ENCODE measurements at regions of chr20 and their contacts with region 1.

Region 1: DNA sequence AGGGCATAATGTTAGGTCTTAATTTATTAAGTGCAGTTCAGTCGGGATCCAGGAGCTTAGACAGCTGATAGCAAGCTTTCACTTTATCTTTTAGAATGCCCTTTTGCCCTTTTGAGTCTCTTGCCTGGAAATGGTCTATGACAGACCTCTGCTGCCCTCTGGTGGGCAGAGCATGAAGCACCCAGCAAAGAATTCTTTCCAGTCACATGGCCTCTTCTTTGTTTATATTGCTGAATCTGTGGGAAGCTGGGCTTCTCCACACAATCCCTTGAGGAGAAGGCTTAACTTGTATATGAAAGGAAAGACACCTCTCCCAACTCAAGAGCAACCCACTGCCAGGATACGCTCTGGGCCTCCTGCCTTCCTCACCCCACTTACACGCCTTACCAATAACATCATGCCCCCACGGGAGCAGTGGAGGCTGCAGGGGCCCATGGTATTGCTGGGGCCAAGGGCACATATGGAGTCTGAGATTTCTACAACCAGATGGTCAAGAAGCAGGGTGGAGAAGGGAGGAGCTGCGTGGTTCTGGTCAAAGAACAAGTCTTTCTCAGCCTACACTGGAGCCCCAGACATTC is 20.4 kb downstream of the WFDC3 start:
- DNase-seq: peak; percentile 94
- H3K4me3 Mint-ChIP-seq: no peak overlapping the region
- H3K27ac Mint-ChIP-seq: no peak overlapping the region
- H3K4me1 Mint-ChIP-seq: peaks cover 8% of the 10 kb centered on the region
- H3K27me3 Mint-ChIP-seq: peaks cover 12% of the 10 kb centered on the region

Region 2: GRCh38 chr20:45456632-45457031 is 314.6 kb before region 1 on chr20:
- intact Hi-C with region 1: loop called (anchors 1 kb)
- DNase-seq: peak; percentile 83
- H3K4me3 Mint-ChIP-seq: no peak overlapping the region
- H3K27ac Mint-ChIP-seq: no peak overlapping the region
- H3K4me1 Mint-ChIP-seq: peaks cover 3% of the 10 kb centered on the region
- H3K27me3 Mint-ChIP-seq: peaks cover 8% of the 10 kb centered on the region

Region 3: DNA sequence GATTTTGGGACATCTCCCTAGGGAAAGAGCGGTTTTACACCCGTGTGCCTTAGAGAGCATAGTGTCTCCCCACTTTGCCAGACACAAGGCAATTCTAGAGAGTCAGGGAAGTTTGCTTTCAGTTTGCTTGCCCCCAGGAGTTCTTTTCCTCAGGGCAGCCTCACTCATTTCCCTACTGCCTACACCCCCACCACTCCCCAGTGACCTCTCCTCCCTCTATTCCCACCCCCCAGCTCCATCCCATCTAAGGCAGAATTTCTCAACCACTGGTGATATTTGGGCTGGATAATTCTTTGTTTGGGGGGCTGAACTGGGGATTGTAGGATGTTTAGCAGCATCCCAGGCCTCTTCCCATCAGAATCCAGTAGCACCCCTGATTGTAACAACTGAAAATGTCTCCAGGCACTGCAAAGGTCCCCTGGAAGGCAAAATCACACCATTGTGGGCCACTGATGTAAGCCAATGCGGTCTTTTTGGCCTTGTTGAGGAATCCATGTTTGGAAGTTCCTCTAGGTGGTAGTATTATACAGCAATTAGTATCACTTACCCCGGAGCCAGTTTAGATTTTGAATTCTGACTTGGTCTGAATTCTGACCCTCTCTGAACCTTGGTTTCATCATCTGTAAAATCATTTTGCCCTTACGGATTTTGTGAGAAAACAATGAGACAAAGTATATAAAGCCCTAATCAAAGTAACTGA is 225.4 kb before region 1 on chr20:
- intact Hi-C with region 1: loop called (anchors 1 kb)
- DNase-seq: no peak
- H3K4me3 Mint-ChIP-seq: no peak overlapping the region
- H3K27ac Mint-ChIP-seq: no peak overlapping the region
- H3K4me1 Mint-ChIP-seq: no peaks in the 10 kb centered on the region
- H3K27me3 Mint-ChIP-seq: peaks cover 25% of the 10 kb centered on the region

Region 4: GRCh38 chr20:45581702-45582101 is 189.6 kb before region 1 on chr20:
- intact Hi-C with region 1: no loop called
- DNase-seq: no peak
- H3K4me3 Mint-ChIP-seq: no peak overlapping the region
- H3K27ac Mint-ChIP-seq: no peak overlapping the region
- H3K4me1 Mint-ChIP-seq: no peaks in the 10 kb centered on the region
- H3K27me3 Mint-ChIP-seq: peaks cover 23% of the 10 kb centered on the region

Region 5: DNA sequence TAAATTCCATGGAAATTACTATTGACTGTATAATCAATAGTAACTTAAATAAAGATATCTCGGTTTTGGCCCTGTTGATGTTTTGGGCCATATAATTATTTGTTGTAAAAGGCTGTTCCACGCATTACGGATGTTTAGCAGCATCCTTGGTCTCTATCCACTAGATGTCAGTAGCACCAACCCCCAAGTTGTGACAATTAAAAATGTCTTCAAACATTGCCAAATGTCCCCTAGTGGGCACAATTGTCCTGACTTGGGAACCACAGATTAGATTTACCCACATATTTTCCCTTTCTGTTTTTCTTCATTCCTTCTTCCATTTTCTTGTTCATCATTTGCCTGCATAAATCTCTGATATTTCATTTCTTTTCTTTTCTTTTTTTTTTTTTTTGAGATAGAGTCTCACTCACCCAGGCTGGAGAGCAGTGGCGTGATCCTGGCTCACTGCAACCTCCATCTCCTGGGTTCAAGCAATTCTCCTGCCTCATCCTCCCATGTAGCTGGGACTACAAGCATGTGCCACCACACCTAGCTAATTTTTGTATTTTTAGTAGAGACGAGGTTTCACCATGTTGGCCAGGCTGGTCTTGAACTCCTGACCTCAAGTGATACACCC is 178.6 kb before region 1 on chr20:
- intact Hi-C with region 1: loop called (anchors 1 kb)
- DNase-seq: peak; percentile 70
- H3K4me3 Mint-ChIP-seq: no peak overlapping the region
- H3K27ac Mint-ChIP-seq: no peak overlapping the region
- H3K4me1 Mint-ChIP-seq: peaks cover 2% of the 10 kb centered on the region
- H3K27me3 Mint-ChIP-seq: peaks cover 30% of the 10 kb centered on the region